GM13977 (cell line): ENCODE measurements at regions of chr16 and their contacts with region 1.

Region 1: GRCh38 chr16:16021988-16022682 is 72.7 kb downstream of the ABCC1 start:
- DNase-seq: no peak
- CTCF ChIP-seq: no peak

Region 2: GRCh38 chr16:15643048-15643945 is 378.8 kb before region 1 on chr16 and contains the start of gene MARF1:
- in situ Hi-C with region 1: no loop called
- DNase-seq: peak; percentile 88
- CTCF ChIP-seq: peak; percentile 22

Region 3: DNA sequence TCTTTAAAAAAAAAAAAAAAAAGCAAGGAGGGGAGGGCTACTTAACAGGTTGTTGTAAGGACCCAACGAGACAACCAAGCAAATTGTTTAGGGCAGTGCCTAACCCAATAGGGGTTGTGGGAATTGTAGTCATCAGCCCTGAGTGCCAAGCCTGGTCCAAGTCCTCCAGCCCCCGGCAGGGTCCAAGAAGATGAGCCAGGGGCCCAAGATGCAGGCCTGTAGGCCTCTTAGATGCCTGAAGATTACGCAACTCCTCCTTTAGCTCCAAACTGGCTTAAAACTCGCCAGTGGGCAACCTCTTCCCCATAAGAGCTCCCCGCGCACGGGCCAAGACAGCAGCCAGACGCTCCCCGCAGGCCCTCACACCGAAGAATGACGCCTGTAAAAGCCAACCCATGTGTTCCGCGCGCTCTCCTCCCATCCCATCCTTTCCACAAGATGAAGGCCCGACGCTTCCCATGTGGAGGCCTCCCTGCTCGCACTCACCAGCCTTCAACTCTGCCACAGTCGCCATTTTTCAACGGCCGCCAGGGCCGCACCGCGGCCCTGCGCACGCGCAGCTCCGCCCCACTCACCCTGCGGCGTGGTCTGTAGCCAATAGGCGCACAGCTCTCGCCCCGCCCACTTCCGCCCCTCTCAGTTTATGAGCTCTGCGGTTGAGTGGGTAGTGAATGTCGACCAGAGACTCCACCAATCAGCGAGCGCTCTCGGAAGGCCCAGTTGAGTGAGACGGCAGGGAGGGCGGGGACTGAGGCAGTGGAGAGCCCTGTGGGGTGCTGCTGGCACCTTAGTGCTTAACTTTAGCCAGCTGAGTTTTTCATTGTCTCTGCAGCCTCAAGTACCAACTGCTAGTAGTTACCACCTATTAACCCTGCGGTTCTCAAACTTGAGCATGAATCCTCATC is 133.8 kb before region 1 on chr16 and contains the start of gene CEP20:
- in situ Hi-C with region 1: loop called (anchors 25 kb)
- DNase-seq: peak; percentile 98
- CTCF ChIP-seq: no peak